Endothelial cell of umbilical vein (primary cell): ENCODE measurements at regions of chr13 and their contacts with region 1.

Region 1: GRCh38 chr13:59677966-59678814 is 485.5 kb downstream of the DIAPH3 start:
- DNase-seq: peak; percentile 79
- H3K4me3 ChIP-seq: no peak overlapping the region
- H3K27ac ChIP-seq: no peak overlapping the region
- H3K4me1 ChIP-seq: peaks cover 2% of the 10 kb centered on the region
- H3K27me3 ChIP-seq: no peaks in the 10 kb centered on the region
- CTCF ChIP-seq: peak; percentile 69 to 70
- POLR2A ChIP-seq: no peak

Region 2: DNA sequence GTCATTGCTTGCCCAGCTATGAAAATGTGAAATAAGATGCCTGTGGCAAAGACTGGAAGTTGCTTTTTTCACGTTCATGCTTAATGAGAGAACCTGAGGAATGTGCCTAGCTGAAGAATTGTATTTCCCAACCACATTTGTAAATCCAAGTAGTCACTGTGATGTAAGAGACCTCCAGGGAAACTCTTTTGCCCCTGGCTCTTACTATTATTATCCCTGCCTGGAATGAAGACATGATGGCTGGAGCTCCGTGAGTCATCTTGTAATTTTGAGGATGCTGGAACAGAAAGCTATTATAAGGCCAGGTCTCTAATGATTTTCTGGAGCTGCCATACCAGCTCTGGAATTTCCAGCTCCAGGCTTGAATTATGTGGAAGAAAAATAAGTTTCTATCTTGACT is 408.7 kb before region 1 on chr13:
- CTCF ChIA-PET with region 1: no interaction called
- POLR2A ChIA-PET with region 1: no interaction called
- dilution Hi-C with region 1: no loop called
- intact Hi-C with region 1: loop called (anchors 5 kb)
- DNase-seq: no peak
- H3K4me3 ChIP-seq: no peak overlapping the region
- H3K27ac ChIP-seq: no peak overlapping the region
- H3K4me1 ChIP-seq: peaks cover 24% of the 10 kb centered on the region
- H3K27me3 ChIP-seq: no peaks in the 10 kb centered on the region
- CTCF ChIP-seq: no peak
- POLR2A ChIP-seq: no peak

Region 3: DNA sequence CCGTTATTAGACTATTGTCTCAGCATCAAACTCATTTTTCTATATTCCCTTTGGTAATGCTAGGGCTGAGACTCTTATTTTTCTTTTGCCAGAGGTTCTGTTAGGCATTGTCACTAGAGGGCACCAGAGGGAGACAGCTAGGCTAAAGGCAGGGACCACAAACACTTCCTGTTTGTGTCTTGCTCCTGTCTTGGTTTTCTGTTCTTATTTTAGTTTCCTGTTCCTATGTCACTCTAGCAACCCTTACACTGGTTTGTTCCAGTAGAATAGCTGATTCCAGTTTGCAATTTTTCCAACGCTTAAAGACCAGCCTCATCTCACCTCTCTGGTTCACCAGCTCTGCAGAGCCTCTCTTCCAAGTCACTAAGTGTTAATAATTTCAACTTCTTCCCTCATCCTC is 286.5 kb before region 1 on chr13:
- CTCF ChIA-PET with region 1: interaction called, 129 read pairs
- POLR2A ChIA-PET with region 1: no interaction called
- dilution Hi-C with region 1: no loop called
- intact Hi-C with region 1: loop called (anchors 1 kb)
- DNase-seq: peak; percentile 78
- H3K4me3 ChIP-seq: no peak overlapping the region
- H3K27ac ChIP-seq: no peak overlapping the region
- H3K4me1 ChIP-seq: peaks cover 15% of the 10 kb centered on the region
- H3K27me3 ChIP-seq: no peaks in the 10 kb centered on the region
- CTCF ChIP-seq: peak; percentile 76
- POLR2A ChIP-seq: no peak

Region 4: GRCh38 chr13:59531571-59532091 is 146.6 kb before region 1 on chr13:
- CTCF ChIA-PET with region 1: interaction called, 6 read pairs
- POLR2A ChIA-PET with region 1: no interaction called
- dilution Hi-C with region 1: no loop called
- intact Hi-C with region 1: loop called (anchors 1 kb)
- DNase-seq: peak; percentile 98
- H3K4me3 ChIP-seq: no peak overlapping the region
- H3K27ac ChIP-seq: peak overlapping the region; percentile 73
- H3K4me1 ChIP-seq: peaks cover 40% of the 10 kb centered on the region
- H3K27me3 ChIP-seq: no peaks in the 10 kb centered on the region
- CTCF ChIP-seq: no peak
- POLR2A ChIP-seq: peak; percentile 68

Region 5: GRCh38 chr13:59721926-59722910 is 44.0 kb after region 1 on chr13:
- CTCF ChIA-PET with region 1: no interaction called
- POLR2A ChIA-PET with region 1: no interaction called
- dilution Hi-C with region 1: no loop called
- intact Hi-C with region 1: no loop called
- DNase-seq: no peak
- H3K4me3 ChIP-seq: no peak overlapping the region
- H3K27ac ChIP-seq: no peak overlapping the region
- H3K4me1 ChIP-seq: no peaks in the 10 kb centered on the region
- H3K27me3 ChIP-seq: no peaks in the 10 kb centered on the region
- CTCF ChIP-seq: no peak
- POLR2A ChIP-seq: no peak

Region 6: DNA sequence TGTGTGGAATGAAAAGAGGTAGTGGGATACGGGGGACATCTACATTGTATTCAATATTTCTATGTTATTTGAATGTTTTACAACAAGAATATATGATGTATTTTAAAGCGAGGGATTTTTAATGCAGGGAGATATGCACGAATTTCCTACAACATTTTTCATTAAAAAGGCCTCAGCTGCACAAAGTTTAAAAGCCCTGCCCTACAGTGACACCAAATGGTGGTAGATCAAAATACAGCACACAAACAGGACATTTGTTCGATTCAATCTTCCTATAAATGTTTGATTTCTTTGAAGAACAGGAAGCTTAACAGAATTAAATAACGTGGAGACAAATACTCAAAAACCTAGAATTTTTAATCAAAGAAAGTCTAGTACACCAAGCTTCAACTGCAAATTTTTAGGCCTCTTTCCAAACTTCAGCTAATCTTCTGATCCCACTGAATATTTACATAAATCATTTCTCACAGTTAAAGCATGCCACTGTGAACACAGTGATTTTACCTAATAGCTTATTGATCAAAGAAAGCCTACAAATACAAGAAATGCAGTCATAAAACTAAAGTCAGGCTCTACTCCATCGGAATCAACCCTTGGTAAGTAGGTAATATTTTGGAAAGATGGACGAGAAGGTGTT is 228.3 kb after region 1 on chr13:
- CTCF ChIA-PET with region 1: interaction called, 145 read pairs
- POLR2A ChIA-PET with region 1: no interaction called
- dilution Hi-C with region 1: no loop called
- intact Hi-C with region 1: loop called (anchors 1 kb)
- DNase-seq: peak; percentile 47
- H3K4me3 ChIP-seq: no peak overlapping the region
- H3K27ac ChIP-seq: no peak overlapping the region
- H3K4me1 ChIP-seq: peaks cover 2% of the 10 kb centered on the region
- H3K27me3 ChIP-seq: no peaks in the 10 kb centered on the region
- CTCF ChIP-seq: peak; percentile 24 to 37
- POLR2A ChIP-seq: no peak

Region 7: GRCh38 chr13:60335531-60335930 is 657.3 kb after region 1 on chr13:
- CTCF ChIA-PET with region 1: interaction called, 33 read pairs
- POLR2A ChIA-PET with region 1: no interaction called
- dilution Hi-C with region 1: no loop called
- intact Hi-C with region 1: loop called (anchors 2 kb)
- DNase-seq: peak; percentile 37
- H3K4me3 ChIP-seq: no peak overlapping the region
- H3K27ac ChIP-seq: no peak overlapping the region
- H3K4me1 ChIP-seq: peaks cover 7% of the 10 kb centered on the region
- H3K27me3 ChIP-seq: peaks cover 9 to 17% of the 10 kb centered on the region in 2 experiments
- CTCF ChIP-seq: peak in 1 of 2 donors; percentile 27
- POLR2A ChIP-seq: no peak